Thyroid gland (tissue), 4 donors: ENCODE measurements at regions of chr3 and their contacts with region 1.

Region 1: DNA sequence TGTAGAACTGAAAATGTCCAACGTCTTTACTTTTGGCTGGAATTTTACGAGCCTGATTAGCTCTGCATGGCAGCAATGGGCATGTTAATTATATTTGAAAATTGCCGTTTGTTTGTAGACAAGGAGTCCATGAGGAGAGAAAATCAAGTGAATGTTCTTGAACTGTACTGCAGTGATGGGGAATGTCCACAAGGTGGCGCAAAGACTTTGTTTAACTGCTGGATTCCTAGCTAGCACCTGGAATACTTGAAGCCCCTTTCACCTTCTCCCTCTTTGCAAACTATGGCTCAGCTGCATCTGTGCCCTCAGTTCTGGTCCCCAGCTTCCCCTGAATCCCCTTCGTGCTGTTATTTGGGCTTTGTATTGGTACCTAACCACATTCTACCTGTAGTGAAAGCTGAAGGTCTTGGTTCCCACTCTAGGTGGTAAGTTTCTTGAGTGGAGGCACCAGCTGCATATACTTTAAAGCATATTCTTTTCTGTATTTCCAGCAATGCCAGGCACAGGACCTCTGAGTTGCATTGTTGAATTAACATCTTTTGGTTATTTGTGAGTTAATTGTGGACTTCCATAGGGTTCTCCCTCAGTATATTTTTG is 25.3 kb downstream of the EXOG start:
- DNase-seq: peak; percentile 69 to 78
- H3K4me3 ChIP-seq: no peak overlapping the region
- H3K27ac ChIP-seq: no peak overlapping the region
- H3K4me1 ChIP-seq: no peaks in the 10 kb centered on the region
- H3K27me3 ChIP-seq: no peaks in the 10 kb centered on the region
- CTCF ChIP-seq: peak; percentile 60 to 90 (median 79)
- POLR2A ChIP-seq: no peak

Region 2: GRCh38 chr3:38460377-38461270 is 60.9 kb before region 1 on chr3:
- intact Hi-C with region 1: no loop called
- DNase-seq: no peak
- H3K4me3 ChIP-seq: no peak overlapping the region
- H3K27ac ChIP-seq: peak overlapping the region; percentile 74 to 96 (median 87)
- H3K4me1 ChIP-seq: peaks cover 37 to 52% of the 10 kb centered on the region in 2 donors
- H3K27me3 ChIP-seq: no peaks in the 10 kb centered on the region
- CTCF ChIP-seq: no peak
- POLR2A ChIP-seq: no peak

Region 3: GRCh38 chr3:38651154-38651789 is 129.8 kb after region 1 on chr3:
- intact Hi-C with region 1: loop called (anchors 5 kb)
- DNase-seq: peak; percentile 67
- H3K4me3 ChIP-seq: no peak overlapping the region
- H3K27ac ChIP-seq: no peak overlapping the region
- H3K4me1 ChIP-seq: peaks cover 7 to 18% of the 10 kb centered on the region in 2 donors
- H3K27me3 ChIP-seq: no peaks in the 10 kb centered on the region
- CTCF ChIP-seq: peak; percentile 82 to 99 (median 89)
- POLR2A ChIP-seq: no peak